Caco-2 (cell line): ENCODE measurements at regions of chr2 and their contacts with region 1.

Region 1: GRCh38 chr2:23351388-23352141 is 33.4 kb upstream of the KLHL29 start:
- DNase-seq: peak; percentile 70 to 74
- H3K4me3 ChIP-seq: no peak overlapping the region
- H3K4me3 Mint-ChIP-seq: no peak overlapping the region
- H3K27ac Mint-ChIP-seq: no peak overlapping the region
- H3K4me1 ChIP-seq: no peaks in the 10 kb centered on the region
- H3K4me1 Mint-ChIP-seq: no peaks in the 10 kb centered on the region
- H3K27me3 ChIP-seq: no peaks in the 10 kb centered on the region; the same call in none of the 2 replicates
- H3K27me3 Mint-ChIP-seq: peaks cover 23% of the 10 kb centered on the region
- CTCF ChIP-seq: peak; percentile 83 to 86

Region 2: GRCh38 chr2:22904126-22904684 is 447.4 kb before region 1 on chr2:
- CTCF ChIA-PET with region 1: no interaction called
- POLR2A ChIA-PET with region 1: no interaction called
- intact Hi-C with region 1: loop called (anchors 1 kb)
- DNase-seq: peak; percentile 42 to 54
- H3K4me3 ChIP-seq: no peak overlapping the region
- H3K4me3 Mint-ChIP-seq: no peak overlapping the region
- H3K27ac Mint-ChIP-seq: no peak overlapping the region
- H3K4me1 ChIP-seq: no peaks in the 10 kb centered on the region
- H3K4me1 Mint-ChIP-seq: no peaks in the 10 kb centered on the region
- H3K27me3 ChIP-seq: no peaks in the 10 kb centered on the region
- H3K27me3 Mint-ChIP-seq: peaks cover under 1% of the 10 kb centered on the region
- CTCF ChIP-seq: peak; percentile 69 to 72

Region 3: GRCh38 chr2:23002234-23002633 is 349.3 kb before region 1 on chr2:
- CTCF ChIA-PET with region 1: no interaction called
- POLR2A ChIA-PET with region 1: no interaction called
- intact Hi-C with region 1: loop called (anchors 5 kb)
- DNase-seq: peak in 1 of 2 experiments; percentile 26
- H3K4me3 ChIP-seq: no peak overlapping the region
- H3K4me3 Mint-ChIP-seq: no peak overlapping the region
- H3K27ac Mint-ChIP-seq: no peak overlapping the region
- H3K4me1 ChIP-seq: no peaks in the 10 kb centered on the region
- H3K4me1 Mint-ChIP-seq: peaks cover 5% of the 10 kb centered on the region
- H3K27me3 ChIP-seq: no peaks in the 10 kb centered on the region
- H3K27me3 Mint-ChIP-seq: peaks cover 10% of the 10 kb centered on the region
- CTCF ChIP-seq: peak in 1 of 2 experiments; percentile 39

Region 4: GRCh38 chr2:23096905-23097602 is 254.5 kb before region 1 on chr2:
- CTCF ChIA-PET with region 1: no interaction called
- POLR2A ChIA-PET with region 1: no interaction called
- intact Hi-C with region 1: no loop called
- DNase-seq: no peak
- H3K4me3 ChIP-seq: no peak overlapping the region
- H3K4me3 Mint-ChIP-seq: no peak overlapping the region
- H3K27ac Mint-ChIP-seq: no peak overlapping the region
- H3K4me1 ChIP-seq: no peaks in the 10 kb centered on the region
- H3K4me1 Mint-ChIP-seq: no peaks in the 10 kb centered on the region
- H3K27me3 ChIP-seq: no peaks in the 10 kb centered on the region
- H3K27me3 Mint-ChIP-seq: peaks cover 3% of the 10 kb centered on the region
- CTCF ChIP-seq: peak in 1 of 2 experiments; percentile 14

Region 5: DNA sequence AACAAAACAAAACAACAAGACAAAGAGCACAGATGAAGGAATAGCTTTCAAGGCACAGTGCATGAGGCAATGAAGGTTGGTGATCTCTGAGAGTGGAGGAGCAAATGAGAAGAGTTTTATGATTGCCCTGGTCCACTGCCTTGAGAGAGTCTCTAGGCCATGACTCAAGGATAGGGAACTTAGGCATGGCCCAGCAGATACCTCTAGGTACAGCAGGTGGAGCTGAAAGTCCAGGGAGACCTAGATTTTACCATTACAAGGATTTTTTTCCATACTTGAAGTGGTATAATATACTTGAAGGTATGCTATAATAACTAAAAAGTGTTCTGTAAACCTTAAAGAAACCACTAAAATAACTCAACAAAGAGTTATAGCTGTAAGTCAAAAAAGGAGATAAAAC is 206.1 kb before region 1 on chr2:
- CTCF ChIA-PET with region 1: no interaction called
- POLR2A ChIA-PET with region 1: no interaction called
- intact Hi-C with region 1: loop called (anchors 1 kb)
- DNase-seq: no peak
- H3K4me3 ChIP-seq: no peak overlapping the region
- H3K4me3 Mint-ChIP-seq: no peak overlapping the region
- H3K27ac Mint-ChIP-seq: no peak overlapping the region
- H3K4me1 ChIP-seq: no peaks in the 10 kb centered on the region
- H3K4me1 Mint-ChIP-seq: no peaks in the 10 kb centered on the region
- H3K27me3 ChIP-seq: no peaks in the 10 kb centered on the region
- H3K27me3 Mint-ChIP-seq: peaks cover 5% of the 10 kb centered on the region
- CTCF ChIP-seq: peak in 1 of 2 experiments; percentile 23

Region 6: GRCh38 chr2:23199115-23199918 is 152.2 kb before region 1 on chr2:
- CTCF ChIA-PET with region 1: interaction called, 3 read pairs
- POLR2A ChIA-PET with region 1: no interaction called
- intact Hi-C with region 1: loop called (anchors 1 kb)
- DNase-seq: peak in 1 of 2 experiments; percentile 40
- H3K4me3 ChIP-seq: no peak overlapping the region
- H3K4me3 Mint-ChIP-seq: no peak overlapping the region
- H3K27ac Mint-ChIP-seq: no peak overlapping the region
- H3K4me1 ChIP-seq: no peaks in the 10 kb centered on the region
- H3K4me1 Mint-ChIP-seq: no peaks in the 10 kb centered on the region
- H3K27me3 ChIP-seq: no peaks in the 10 kb centered on the region
- H3K27me3 Mint-ChIP-seq: peaks cover 14% of the 10 kb centered on the region
- CTCF ChIP-seq: peak; percentile 72 to 77

Region 7: GRCh38 chr2:23312996-23313606 is 38.5 kb before region 1 on chr2:
- CTCF ChIA-PET with region 1: no interaction called
- POLR2A ChIA-PET with region 1: no interaction called
- intact Hi-C with region 1: no loop called
- DNase-seq: peak in 1 of 2 experiments; percentile 49
- H3K4me3 ChIP-seq: no peak overlapping the region
- H3K4me3 Mint-ChIP-seq: no peak overlapping the region
- H3K27ac Mint-ChIP-seq: no peak overlapping the region
- H3K4me1 ChIP-seq: no peaks in the 10 kb centered on the region
- H3K4me1 Mint-ChIP-seq: no peaks in the 10 kb centered on the region
- H3K27me3 ChIP-seq: no peaks in the 10 kb centered on the region
- H3K27me3 Mint-ChIP-seq: peaks cover 19% of the 10 kb centered on the region
- CTCF ChIP-seq: peak; percentile 79 to 80